PC-3 (cell line): ENCODE measurements at regions of chr1 and their contacts with region 1.

Region 1: GRCh38 chr1:48061162-48062136 is 64.3 kb upstream of the TRABD2B start:
- DNase-seq: peak; percentile 78
- ATAC-seq: peak; percentile 71
- H3K4me3 ChIP-seq: no peak overlapping the region
- H3K27ac ChIP-seq: no peak overlapping the region
- H3K4me1 ChIP-seq: no peaks in the 10 kb centered on the region
- H3K27me3 ChIP-seq: no peaks in the 10 kb centered on the region
- CTCF ChIP-seq: peak; percentile 81

Region 2: DNA sequence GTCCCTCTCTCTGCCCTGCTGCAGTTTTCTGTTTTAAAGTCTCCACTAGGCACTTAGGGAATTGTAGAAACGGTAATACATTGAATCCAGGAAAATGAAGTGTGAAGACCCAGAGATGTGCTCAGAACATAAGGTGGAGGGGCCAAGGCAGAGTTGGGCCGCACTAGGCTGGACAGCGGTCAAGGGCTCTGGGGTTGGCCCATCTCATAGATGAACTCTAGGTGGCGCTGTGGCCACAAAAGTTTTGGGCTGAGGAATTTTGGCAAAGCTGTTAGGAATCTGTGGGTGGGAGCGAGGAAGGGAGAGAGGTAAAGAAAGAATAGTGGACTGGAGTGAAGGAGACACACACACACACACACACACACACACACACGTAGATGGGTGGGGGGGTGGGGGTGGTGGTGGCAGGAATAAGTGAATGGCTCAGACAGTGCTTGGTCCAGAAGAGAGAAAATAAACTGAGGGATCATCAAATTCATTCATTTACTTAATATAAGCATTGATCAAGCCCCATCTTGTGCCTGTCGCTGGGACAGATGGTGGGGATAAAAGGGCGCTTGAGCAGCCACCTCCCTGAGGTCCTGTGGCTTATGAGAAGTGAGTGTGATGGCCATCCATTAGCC is 322.8 kb before region 1 on chr1:
- CTCF ChIA-PET with region 1: no interaction called
- POLR2A ChIA-PET with region 1: no interaction called
- intact Hi-C with region 1: loop called (anchors 1 kb)
- DNase-seq: peak; percentile 79
- ATAC-seq: peak; percentile 94
- H3K4me3 ChIP-seq: no peak overlapping the region
- H3K27ac ChIP-seq: no peak overlapping the region
- H3K4me1 ChIP-seq: no peaks in the 10 kb centered on the region
- H3K27me3 ChIP-seq: peaks cover 6% of the 10 kb centered on the region; the same call in 1 of the 2 replicates
- CTCF ChIP-seq: peak; percentile 76

Region 3: DNA sequence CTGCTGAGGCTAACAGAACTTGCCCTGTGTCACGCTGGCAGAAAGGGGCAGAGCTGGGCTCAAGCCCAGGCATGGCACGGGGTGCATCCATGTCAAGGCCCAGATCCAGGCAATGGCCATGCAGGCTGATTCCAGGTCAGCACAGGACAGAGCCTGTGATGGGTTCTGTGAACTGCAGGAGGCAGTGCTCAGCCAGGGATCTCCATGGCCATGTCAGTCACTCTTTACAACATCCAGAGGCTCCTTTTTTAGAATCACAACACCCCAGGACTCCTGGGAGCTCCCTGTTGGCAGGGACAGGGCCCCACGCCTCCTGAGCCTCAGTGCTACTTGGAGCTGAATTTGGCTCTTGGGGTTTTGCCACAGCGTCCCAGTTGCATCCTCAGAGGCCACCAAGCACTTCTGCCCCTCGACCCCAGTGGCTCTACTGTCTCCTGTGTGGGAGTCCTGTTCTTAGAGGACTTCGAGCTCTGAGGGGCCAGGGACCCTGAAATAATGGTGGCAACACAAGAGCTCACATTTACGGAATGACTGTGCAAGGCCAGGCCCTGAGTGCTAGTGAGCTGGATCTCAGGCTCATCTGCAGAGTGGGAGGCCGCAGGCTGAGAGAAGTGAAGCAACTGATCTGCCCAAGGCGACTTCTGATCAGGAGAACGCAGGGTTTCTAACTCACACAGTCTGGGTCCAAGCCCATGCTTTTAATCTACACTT is 275.7 kb before region 1 on chr1:
- CTCF ChIA-PET with region 1: no interaction called
- POLR2A ChIA-PET with region 1: interaction called, 3 read pairs
- intact Hi-C with region 1: loop called (anchors 2 kb)
- DNase-seq: peak; percentile 22
- ATAC-seq: peak; percentile 79
- H3K4me3 ChIP-seq: no peak overlapping the region
- H3K27ac ChIP-seq: no peak overlapping the region
- H3K4me1 ChIP-seq: peaks cover 16% of the 10 kb centered on the region
- H3K27me3 ChIP-seq: no peaks in the 10 kb centered on the region
- CTCF ChIP-seq: peak; percentile 48

Region 4: GRCh38 chr1:48007044-48007443 is 54.4 kb before region 1 on chr1:
- CTCF ChIA-PET with region 1: no interaction called
- POLR2A ChIA-PET with region 1: no interaction called
- intact Hi-C with region 1: loop called (anchors 2 kb)
- DNase-seq: peak; percentile 8
- ATAC-seq: no peak
- H3K4me3 ChIP-seq: no peak overlapping the region
- H3K27ac ChIP-seq: no peak overlapping the region
- H3K4me1 ChIP-seq: peaks cover 3% of the 10 kb centered on the region; the same call in 1 of the 2 replicates
- H3K27me3 ChIP-seq: peaks cover 2% of the 10 kb centered on the region; the same call in 1 of the 2 replicates
- CTCF ChIP-seq: no peak